IMR-90 (cell line): ENCODE measurements at regions of chr20 and their contacts with region 1.

Region 1: DNA sequence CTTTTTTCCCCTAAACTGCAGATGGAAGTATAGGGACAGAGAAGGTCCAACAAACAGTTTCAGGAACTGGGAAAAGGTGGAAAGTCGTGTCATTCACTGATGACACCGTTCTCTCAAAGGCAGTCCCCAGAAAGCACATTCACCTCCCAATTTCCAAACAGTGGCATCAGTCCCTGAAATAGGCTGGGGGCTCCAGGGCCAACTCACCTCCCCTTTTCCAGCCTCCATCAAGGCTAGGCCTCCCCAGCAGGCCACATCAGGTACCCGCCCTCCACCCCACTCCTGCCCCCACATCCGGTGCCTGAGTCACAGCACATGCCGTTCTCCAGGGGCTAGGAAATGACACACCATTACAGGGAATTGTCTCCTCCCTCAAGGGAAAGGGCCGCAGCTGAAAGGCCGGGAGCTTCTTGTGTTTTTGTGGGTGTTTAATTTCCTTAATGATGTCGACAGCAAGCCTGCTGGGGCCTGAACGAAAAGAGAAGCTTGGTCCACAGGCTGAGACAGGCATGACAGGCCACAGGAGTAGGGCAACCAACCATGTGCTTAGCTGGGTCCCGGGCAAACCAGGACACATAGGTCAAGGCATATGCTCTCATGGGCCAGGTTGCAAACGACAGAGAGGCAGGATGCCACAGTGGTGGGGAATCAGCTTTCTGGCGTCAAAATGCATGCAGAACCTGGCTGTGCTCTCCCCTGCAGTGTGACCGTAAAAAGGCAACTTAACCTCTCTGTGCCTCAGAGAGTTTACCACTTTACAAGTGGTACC is 39.2 kb downstream of the ZMYND8 start:
- DNase-seq: peak; percentile 98
- ATAC-seq: peak; percentile 63
- H3K4me3 ChIP-seq: no peak overlapping the region
- H3K27ac ChIP-seq: peak overlapping the region; percentile 95
- H3K4me1 ChIP-seq: peaks cover 46% of the 10 kb centered on the region
- H3K27me3 ChIP-seq: no peaks in the 10 kb centered on the region
- CTCF ChIP-seq: no peak
- POLR2A ChIP-seq: peak; percentile 78; the same call in 1 of the 2 replicates
- RAD21 ChIP-seq: peak; percentile 14; the same call in 1 of the 2 replicates

Region 2: GRCh38 chr20:47356526-47357295 is 39.4 kb after region 1 on chr20 and contains the start of gene ZMYND8:
- CTCF ChIA-PET with region 1: interaction called, 3 read pairs
- POLR2A ChIA-PET with region 1: interaction called, 27 read pairs
- dilution Hi-C with region 1: no loop called
- in situ Hi-C with region 1: no loop called
- intact Hi-C with region 1: loop called (anchors 1 kb)
- DNase-seq: peak; percentile 92
- ATAC-seq: peak; percentile 58
- H3K4me3 ChIP-seq: no peak within 1 kb of the TSS
- H3K27ac ChIP-seq: peak within 1 kb of the TSS; percentile 98
- H3K4me1 ChIP-seq: peaks cover 76% of the 10 kb centered on the region
- H3K27me3 ChIP-seq: no peaks in the 10 kb centered on the region
- CTCF ChIP-seq: no peak
- POLR2A ChIP-seq: 0 out of 2 replicates have a peak, but pooled peaks have one; percentile 12
- RAD21 ChIP-seq: no peak
- total RNA-seq, gene ZMYND8: 23.6 and 24.0 TPM in 2 replicates